Ovary (tissue), 10 donors: ENCODE measurements at regions of chr5 and their contacts with region 1.

Region 1: DNA sequence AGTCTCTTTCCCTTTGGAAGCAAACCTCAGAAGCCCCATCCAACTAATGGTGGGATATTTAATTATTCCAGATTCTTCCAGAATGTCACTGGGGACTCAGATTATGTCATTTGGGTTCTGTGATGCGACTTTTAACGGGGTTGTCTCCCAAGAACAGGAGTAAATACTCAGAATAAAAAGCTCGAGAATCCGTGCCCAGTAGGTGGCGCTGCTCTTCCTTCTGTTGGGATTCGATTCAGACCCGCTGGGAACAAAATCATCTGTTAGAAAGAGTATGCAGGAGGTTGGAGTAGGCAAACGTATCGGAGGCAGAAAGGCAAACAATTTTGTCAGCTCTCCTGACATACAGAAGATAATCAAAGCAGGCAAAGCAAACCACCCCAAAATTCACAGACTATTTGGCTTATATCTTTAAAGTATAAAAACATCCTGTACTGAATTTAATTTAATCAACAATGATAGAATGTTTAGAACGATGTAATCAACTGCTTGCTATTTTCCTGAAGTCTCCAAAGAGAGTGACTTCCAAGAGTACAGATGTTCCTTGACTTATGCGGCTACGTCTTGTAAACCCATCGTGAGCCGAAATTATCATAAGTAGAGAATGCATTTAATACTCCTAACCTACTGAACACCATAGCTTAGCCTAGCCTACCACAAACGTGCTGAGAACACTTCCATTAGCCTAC is 169.8 kb upstream of the RAI14 start:
- DNase-seq: peak; percentile 65 to 88 (median 81)
- H3K4me3 ChIP-seq: no peak overlapping the region
- H3K27ac ChIP-seq: no peak overlapping the region
- H3K4me1 ChIP-seq: no peaks in the 10 kb centered on the region
- H3K27me3 ChIP-seq: no peaks in the 10 kb centered on the region
- CTCF ChIP-seq: peak; percentile 64 to 76 (median 74)
- EP300 ChIP-seq: no peak
- POLR2A ChIP-seq: no peak

Region 2: DNA sequence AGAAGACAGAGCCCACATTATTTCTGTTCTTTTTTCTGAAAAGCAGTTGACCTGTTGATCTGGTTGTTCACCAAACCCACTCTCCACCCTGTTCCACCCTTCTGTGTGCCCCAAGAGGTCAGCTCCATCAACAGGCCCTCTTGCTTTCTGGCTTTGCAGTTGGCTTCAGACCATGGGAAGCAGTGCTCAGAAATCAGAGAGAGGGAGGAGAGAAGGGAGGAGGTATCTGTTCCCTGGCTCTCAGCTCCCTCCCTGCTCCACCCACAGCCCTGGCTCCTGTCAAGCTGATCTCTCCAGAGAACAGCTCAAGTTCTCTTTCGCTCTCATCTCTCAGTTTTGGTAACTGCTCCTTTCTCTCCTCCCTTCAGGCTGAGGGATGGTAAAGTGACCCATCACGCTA is 25.6 kb after region 1 on chr5:
- intact Hi-C with region 1: no loop called
- DNase-seq: peak in 3 of 5 donors; percentile 31 to 63 (median 46)
- H3K4me3 ChIP-seq: no peak overlapping the region
- H3K27ac ChIP-seq: no peak overlapping the region
- H3K4me1 ChIP-seq: peaks cover 2% of the 10 kb centered on the region
- H3K27me3 ChIP-seq: no peaks in the 10 kb centered on the region
- CTCF ChIP-seq: no peak
- EP300 ChIP-seq: no peak
- POLR2A ChIP-seq: no peak

Region 3: DNA sequence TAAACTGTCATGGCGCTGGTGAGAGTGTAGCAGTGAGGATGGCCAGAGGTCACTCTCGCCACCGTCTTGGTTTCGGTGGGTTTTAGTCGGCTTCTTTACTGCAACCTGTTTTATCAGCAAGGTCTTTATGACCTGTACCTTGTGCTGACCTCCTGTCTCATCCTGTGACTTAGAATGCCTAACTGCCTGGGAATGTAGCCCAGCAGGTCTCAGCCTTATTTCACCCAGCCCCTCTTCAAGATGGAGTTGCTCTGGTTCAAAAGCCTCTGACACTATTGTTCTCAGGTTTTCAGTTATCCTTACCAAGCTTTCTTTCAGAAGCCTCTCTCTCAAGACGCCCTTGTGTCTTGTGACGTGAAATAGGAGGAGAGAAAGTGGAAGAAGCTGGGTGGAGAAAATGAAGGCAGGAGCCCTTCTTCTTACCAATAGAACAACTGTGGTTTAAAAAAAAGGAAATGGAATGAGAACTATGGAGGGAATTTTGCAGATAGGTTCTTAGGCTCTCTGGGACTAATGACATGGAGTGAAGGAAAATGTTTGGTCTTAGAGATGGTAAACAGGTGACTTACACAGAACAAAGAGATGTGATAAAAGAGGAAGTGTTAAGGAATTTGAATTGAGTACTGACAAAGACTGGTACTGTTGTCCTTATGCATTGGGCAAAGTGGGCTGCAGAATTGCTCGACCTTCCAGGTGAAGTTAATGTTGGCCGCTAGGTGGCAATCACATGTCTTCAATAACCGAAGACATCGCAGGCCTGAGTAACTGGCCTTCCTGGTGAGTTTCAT is 36.5 kb after region 1 on chr5:
- intact Hi-C with region 1: loop called in 1 of 4 experiments (anchors 5 kb)
- DNase-seq: peak; percentile 60 to 84 (median 71)
- H3K4me3 ChIP-seq: no peak overlapping the region
- H3K27ac ChIP-seq: no peak overlapping the region
- H3K4me1 ChIP-seq: no peaks in the 10 kb centered on the region
- H3K27me3 ChIP-seq: no peaks in the 10 kb centered on the region
- CTCF ChIP-seq: peak; percentile 53 to 74 (median 66)
- EP300 ChIP-seq: no peak
- POLR2A ChIP-seq: no peak

Region 4: GRCh38 chr5:34695275-34696027 is 209.1 kb after region 1 on chr5:
- intact Hi-C with region 1: no loop called
- DNase-seq: no peak
- H3K4me3 ChIP-seq: no peak overlapping the region
- H3K27ac ChIP-seq: no peak overlapping the region
- H3K4me1 ChIP-seq: peaks cover 7% of the 10 kb centered on the region
- H3K27me3 ChIP-seq: no peaks in the 10 kb centered on the region
- CTCF ChIP-seq: no peak
- EP300 ChIP-seq: no peak
- POLR2A ChIP-seq: no peak

Region 5: GRCh38 chr5:34898258-34898895 is 412.1 kb after region 1 on chr5:
- intact Hi-C with region 1: loop called in 1 of 4 experiments (anchors 5 kb)
- DNase-seq: peak; percentile 52 to 74 (median 68)
- H3K4me3 ChIP-seq: no peak overlapping the region
- H3K27ac ChIP-seq: no peak overlapping the region
- H3K4me1 ChIP-seq: no peaks in the 10 kb centered on the region
- H3K27me3 ChIP-seq: no peaks in the 10 kb centered on the region
- CTCF ChIP-seq: peak; percentile 57 to 79 (median 63)
- EP300 ChIP-seq: no peak
- POLR2A ChIP-seq: no peak

Region 6: DNA sequence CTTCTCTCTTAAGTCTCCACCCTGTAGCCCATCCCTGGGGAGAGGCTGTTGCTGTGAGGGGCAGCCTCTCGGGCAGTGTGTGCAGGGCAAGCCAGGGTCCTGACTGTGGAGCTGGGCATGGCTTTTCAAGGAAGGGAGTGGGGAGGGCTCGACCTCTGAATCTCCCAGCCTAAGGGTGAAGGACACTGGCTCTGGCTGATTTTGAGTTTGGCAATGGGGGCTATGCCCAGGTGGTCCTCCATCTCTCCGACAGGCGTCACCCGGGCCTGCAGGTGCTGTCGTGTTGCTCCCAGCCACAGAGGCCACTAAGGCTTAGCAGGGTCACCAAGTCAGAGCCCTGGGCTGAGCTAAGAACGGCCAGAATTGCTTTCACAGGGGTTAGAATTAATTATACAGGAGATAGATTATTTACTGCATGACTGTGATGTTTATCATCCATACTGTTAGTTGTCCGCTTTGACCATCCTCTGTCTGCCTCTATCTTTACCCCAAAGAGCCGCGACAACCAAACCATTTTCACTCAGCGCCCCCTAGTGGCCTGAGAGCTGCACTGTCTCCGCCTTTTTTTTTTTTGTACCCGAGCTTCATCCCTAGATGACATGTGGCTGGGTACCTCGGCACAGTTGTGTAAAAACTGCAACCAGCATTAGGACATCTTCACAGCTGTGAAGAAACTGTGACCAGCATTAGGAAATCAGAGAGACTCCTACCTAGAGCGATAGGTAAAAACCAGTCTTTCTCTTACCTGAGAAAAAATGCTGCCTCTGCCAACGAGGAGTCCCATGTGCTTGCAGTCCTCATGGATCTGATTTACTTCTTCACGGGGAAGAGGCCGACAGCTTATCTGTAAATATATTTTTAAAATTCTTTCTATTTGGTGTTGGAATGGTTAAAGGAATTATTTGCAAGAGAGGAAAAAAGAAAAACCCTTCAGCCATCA is 517.0 kb after region 1 on chr5:
- intact Hi-C with region 1: loop called in 1 of 4 experiments (anchors 5 kb)
- DNase-seq: peak; percentile 28 to 64 (median 61)
- H3K4me3 ChIP-seq: no peak overlapping the region
- H3K27ac ChIP-seq: no peak overlapping the region
- H3K4me1 ChIP-seq: no peaks in the 10 kb centered on the region
- H3K27me3 ChIP-seq: no peaks in the 10 kb centered on the region
- CTCF ChIP-seq: peak in 2 of 3 donors; percentile 27 to 34
- EP300 ChIP-seq: no peak
- POLR2A ChIP-seq: no peak